ENCODE measurements at regions of chr10 and their contacts with region 1.

Region 1: GRCh38 chr10:70363971-70364771 is 18.3 kb downstream of the LRRC20 start:
- DNase-seq: peak; percentile 94
- H3K4me3 Mint-ChIP-seq: no peak overlapping the region
- H3K27ac Mint-ChIP-seq: peak overlapping the region; percentile 38
- H3K4me1 Mint-ChIP-seq: peaks cover 9% of the 10 kb centered on the region
- H3K27me3 Mint-ChIP-seq: no peaks in the 10 kb centered on the region
- CTCF ChIP-seq: peak; percentile 98

Region 2: GRCh38 chr10:70146489-70147258 is 217.5 kb before region 1 on chr10 and contains the start of gene TYSND1:
- CTCF ChIA-PET with region 1: interaction called, 11 read pairs
- intact Hi-C with region 1: loop called (anchors 2 kb)
- DNase-seq: peak; percentile 98
- H3K4me3 Mint-ChIP-seq: peak within 1 kb of the TSS; percentile 86
- H3K27ac Mint-ChIP-seq: peak within 1 kb of the TSS; percentile 91
- H3K4me1 Mint-ChIP-seq: peaks cover 8% of the 10 kb centered on the region
- H3K27me3 Mint-ChIP-seq: no peaks in the 10 kb centered on the region
- CTCF ChIP-seq: peak; percentile 12
- total RNA-seq, gene TYSND1: 21.4 and 24.6 TPM in 2 replicates

Region 3: DNA sequence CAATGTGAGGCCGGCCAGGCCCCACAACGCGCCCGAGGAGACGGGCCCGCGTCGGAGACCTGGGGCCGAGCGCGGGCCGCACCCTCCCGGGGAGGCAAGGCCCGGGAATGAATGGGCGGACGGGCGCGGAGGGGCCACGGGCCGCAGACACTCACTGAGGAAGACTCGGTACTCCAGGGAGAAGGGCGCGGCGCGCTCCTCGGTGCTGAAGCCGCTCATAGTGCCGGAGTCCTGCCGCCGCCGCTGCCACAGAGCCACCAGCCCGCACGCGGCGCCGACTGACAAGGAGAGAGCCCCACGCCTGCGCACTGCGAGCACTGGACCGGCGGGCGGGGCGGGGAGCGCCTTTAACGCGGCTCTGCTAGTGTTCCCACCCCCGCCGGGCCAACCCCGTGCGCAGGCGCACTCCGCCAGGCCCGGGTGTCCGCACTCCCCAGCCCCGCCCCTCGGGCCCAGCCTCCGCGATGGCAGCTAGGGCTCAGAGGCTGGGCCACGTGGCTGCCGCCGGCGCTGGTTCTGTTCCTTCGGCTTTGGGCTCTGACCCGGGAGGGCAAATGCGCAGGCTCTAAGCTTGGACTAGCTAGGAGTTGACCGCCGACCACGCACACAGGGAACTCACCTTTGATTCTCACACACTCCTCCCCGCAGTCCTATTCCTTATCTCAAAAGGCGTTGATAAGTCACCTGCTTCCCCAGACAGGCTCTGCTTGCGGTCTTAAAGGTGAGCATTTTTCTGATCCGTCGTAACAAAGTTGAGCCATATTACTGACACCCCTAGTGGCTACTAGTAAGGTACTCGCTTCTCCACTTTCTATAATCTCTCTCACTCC is 130.8 kb before region 1 on chr10 and contains the start of gene PPA1:
- CTCF ChIA-PET with region 1: interaction called, 22 read pairs
- intact Hi-C with region 1: no loop called
- DNase-seq: peak; percentile 100
- H3K4me3 Mint-ChIP-seq: peak within 1 kb of the TSS; percentile 75
- H3K27ac Mint-ChIP-seq: peak within 1 kb of the TSS; percentile 97
- H3K4me1 Mint-ChIP-seq: peaks cover 7% of the 10 kb centered on the region
- H3K27me3 Mint-ChIP-seq: no peaks in the 10 kb centered on the region
- CTCF ChIP-seq: no peak
- total RNA-seq, gene PPA1: 260 and 280 TPM in 2 replicates

Region 4: DNA sequence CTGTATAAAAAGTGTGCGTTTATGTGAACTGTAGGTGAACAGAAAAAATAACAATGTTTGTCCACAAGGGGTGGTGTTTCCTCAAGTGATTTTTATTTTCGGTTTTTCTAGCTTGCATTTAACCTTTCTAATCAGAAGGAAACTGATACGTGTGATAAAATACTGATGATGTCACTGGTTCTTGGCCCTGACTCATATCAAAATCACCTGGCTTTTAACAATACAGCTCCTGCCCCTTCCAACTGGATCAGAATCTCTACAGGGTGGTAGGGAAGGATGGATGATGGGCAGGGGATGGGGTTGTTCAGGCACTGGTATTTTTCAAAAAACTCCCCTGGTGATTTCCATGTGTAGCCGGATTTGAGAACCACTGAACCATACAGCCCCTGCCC is 91.2 kb before region 1 on chr10:
- CTCF ChIA-PET with region 1: interaction called, 13 read pairs
- intact Hi-C with region 1: no loop called
- DNase-seq: no peak
- H3K4me3 Mint-ChIP-seq: no peak overlapping the region
- H3K27ac Mint-ChIP-seq: no peak overlapping the region
- H3K4me1 Mint-ChIP-seq: peaks cover 14% of the 10 kb centered on the region
- H3K27me3 Mint-ChIP-seq: no peaks in the 10 kb centered on the region
- CTCF ChIP-seq: peak; percentile 53

Measured in Calu3 (cell line).